Activated B cell treated with CpG ODN at 0.5 μM for 24 hours (primary cell): ENCODE measurements at regions of chr5 and their contacts with region 1.

Region 1: DNA sequence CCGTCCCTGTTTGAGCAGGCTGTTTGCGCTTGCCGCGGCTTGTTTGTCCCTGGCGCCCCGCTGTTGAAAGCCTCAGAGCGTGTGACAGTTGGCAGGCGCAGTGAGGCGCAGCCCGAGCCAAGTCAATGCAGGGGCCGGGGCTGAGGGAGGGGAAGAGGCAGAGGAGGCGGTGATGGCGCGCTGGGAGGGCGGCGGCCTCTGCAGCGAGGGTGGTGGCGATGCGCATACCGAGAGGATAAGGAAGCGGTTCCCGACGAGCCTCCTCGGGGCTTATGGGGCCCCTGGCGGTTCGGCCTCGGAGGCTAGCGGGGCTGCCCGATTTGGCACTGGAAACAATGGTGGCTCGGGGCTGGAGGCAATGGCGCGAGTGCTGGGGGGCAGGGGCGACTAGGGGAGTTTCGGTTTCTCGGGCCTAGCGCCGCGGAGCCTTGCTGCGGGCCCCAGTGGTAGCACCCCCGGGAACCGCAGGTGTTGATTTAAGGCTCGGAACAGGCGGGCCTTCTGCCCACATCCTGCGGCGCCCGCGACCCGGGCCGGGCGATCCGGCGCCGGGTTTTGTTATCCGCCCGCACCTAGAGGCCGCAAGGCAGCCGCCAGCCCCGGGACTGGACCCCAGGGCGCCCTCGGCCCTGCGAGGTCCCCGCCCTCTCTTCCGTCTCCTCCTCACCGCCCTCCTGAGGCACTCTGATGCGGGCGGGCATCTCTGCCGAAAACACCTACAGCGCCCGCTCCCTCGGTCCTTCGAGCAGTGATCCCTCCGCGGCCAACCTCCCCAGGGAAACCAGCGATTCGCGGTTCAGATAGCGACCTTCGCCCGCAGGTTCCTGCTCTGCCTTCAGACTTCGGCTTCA is 947 bp upstream of the LNPEP start:
- DNase-seq: peak; percentile 97
- ATAC-seq: peak; percentile 69
- H3K4me3 Mint-ChIP-seq: peak overlapping the region; percentile 98
- H3K27ac Mint-ChIP-seq: peak overlapping the region; percentile 98
- H3K4me1 Mint-ChIP-seq: peaks cover 78% of the 10 kb centered on the region
- H3K27me3 Mint-ChIP-seq: no peaks in the 10 kb centered on the region
- CTCF ChIP-seq: no peak

Region 2: GRCh38 chr5:95554647-95555548 is 1380.0 kb before region 1 on chr5 and contains the starts of genes ARSK and SKIC3:
- CTCF ChIA-PET with region 1: no interaction called
- POLR2A ChIA-PET with region 1: no interaction called
- intact Hi-C with region 1: loop called (anchors 2 kb)
- DNase-seq: peak; percentile 80
- ATAC-seq: peak; percentile 86
- H3K4me3 Mint-ChIP-seq: peak within 1 kb of the TSS; percentile 95
- H3K27ac Mint-ChIP-seq: peak within 1 kb of the TSS; percentile 92
- H3K4me1 Mint-ChIP-seq: peaks cover 43% of the 10 kb centered on the region
- H3K27me3 Mint-ChIP-seq: no peaks in the 10 kb centered on the region
- CTCF ChIP-seq: no peak
- total RNA-seq, gene ARSK: 2.3 and 2.9 TPM in 2 replicates
- total RNA-seq, gene SKIC3: 67.4 and 78.7 TPM in 2 replicates

Region 3: GRCh38 chr5:96662725-96663513 is 272.0 kb before region 1 on chr5:
- CTCF ChIA-PET with region 1: no interaction called
- POLR2A ChIA-PET with region 1: interaction called, 8 read pairs
- intact Hi-C with region 1: loop called (anchors 1 kb)
- DNase-seq: peak; percentile 89
- ATAC-seq: peak; percentile 72
- H3K4me3 Mint-ChIP-seq: peak overlapping the region; percentile 98
- H3K27ac Mint-ChIP-seq: peak overlapping the region; percentile 98
- H3K4me1 Mint-ChIP-seq: peaks cover 51% of the 10 kb centered on the region
- H3K27me3 Mint-ChIP-seq: no peaks in the 10 kb centered on the region
- CTCF ChIP-seq: no peak

Region 4: DNA sequence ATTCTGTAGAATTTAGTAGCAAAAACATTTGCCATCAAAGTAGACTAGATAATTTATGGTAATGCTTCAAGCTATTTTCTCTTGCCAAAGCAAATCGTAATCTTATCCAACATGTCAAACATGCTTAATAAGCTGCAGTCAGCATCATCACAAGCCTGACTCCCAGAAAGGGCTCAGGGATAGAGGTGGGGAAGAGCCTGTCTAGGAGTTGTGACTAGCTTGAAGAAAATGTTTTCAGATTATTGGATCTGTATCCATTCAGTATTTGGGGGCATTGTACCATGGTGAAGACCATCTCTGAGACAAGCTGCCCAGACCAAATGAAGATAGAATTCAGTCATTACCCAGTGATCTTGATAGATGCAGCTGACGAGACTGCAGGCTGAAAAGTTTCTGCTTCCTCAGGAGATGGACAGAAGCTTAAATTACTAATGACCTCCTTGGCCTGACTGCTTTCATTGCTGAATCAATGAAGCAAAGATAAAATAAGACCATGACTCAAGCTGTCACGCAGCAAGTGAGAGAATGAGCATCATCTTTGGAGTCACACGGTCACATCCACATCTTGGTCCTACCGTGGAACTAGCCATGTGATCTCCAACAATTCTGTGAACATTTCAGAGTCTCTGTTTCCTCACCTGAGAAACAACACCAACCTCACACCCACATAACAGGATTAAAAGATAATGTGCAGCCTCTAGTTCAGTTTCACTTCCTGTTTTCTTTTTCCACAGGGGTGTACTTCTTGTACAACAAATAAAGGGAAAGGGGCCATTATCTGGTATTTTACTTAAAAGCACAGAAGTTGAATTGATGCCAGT is 49.2 kb before region 1 on chr5:
- CTCF ChIA-PET with region 1: no interaction called
- POLR2A ChIA-PET with region 1: interaction called, 12 read pairs
- intact Hi-C with region 1: no loop called
- DNase-seq: no peak
- ATAC-seq: peak; percentile 85
- H3K4me3 Mint-ChIP-seq: peak overlapping the region; percentile 67
- H3K27ac Mint-ChIP-seq: peak overlapping the region; percentile 91
- H3K4me1 Mint-ChIP-seq: peaks cover 58% of the 10 kb centered on the region
- H3K27me3 Mint-ChIP-seq: no peaks in the 10 kb centered on the region
- CTCF ChIP-seq: no peak

Region 5: DNA sequence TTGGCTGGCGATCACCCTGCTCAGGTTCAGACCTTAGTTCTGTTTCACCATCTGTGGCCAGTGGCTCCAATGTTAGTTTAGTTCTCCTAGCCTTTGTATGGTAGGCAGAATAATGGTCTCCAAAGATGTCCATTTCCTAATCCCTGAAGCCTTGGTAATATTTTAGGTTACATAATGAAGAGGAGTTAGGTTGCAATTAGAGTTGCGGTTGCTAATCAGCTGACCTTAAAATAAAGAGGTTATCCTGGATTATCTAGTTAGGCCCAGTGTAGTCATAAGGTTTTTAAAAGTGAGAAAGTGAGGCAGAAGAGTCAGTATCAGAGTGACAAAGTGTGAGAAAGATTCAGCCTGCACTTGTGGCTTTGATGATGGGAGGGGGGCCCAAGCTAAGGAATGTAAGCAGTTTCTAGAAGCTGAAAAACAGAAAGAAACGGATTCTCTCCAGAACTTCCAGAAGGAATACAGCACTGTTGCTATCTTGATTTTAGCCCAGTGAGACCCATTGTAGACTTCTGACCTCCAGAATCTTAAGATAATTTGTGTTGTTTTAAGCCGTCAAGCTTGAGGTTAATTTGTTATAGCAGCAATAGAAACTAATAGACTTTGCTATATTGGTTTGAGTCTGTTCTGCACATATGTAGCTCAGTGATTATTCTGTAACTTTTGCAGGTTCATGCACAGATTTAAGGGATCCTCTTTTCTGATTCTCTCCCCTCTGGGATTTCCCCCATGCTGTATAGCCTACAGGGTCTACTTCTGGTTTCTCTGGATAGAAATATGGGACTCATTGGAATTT is 22.5 kb after region 1 on chr5:
- CTCF ChIA-PET with region 1: interaction called, 3 read pairs
- POLR2A ChIA-PET with region 1: interaction called, 29 read pairs
- intact Hi-C with region 1: loop called (anchors 1 kb)
- DNase-seq: no peak
- ATAC-seq: peak; percentile 40
- H3K4me3 Mint-ChIP-seq: peak overlapping the region; percentile 73
- H3K27ac Mint-ChIP-seq: peak overlapping the region; percentile 86
- H3K4me1 Mint-ChIP-seq: peaks cover 84% of the 10 kb centered on the region
- H3K27me3 Mint-ChIP-seq: no peaks in the 10 kb centered on the region
- CTCF ChIP-seq: no peak

Region 6: GRCh38 chr5:96997265-96997859 is 62.4 kb after region 1 on chr5:
- CTCF ChIA-PET with region 1: interaction called, 6 read pairs
- POLR2A ChIA-PET with region 1: interaction called, 16 read pairs
- intact Hi-C with region 1: loop called (anchors 2 kb)
- DNase-seq: no peak
- ATAC-seq: peak; percentile 68
- H3K4me3 Mint-ChIP-seq: no peak overlapping the region
- H3K27ac Mint-ChIP-seq: no peak overlapping the region
- H3K4me1 Mint-ChIP-seq: peaks cover 6% of the 10 kb centered on the region
- H3K27me3 Mint-ChIP-seq: no peaks in the 10 kb centered on the region
- CTCF ChIP-seq: no peak

Region 7: GRCh38 chr5:97183100-97183929 is 248.4 kb after region 1 on chr5 and contains the start of gene RIOK2:
- CTCF ChIA-PET with region 1: no interaction called
- POLR2A ChIA-PET with region 1: no interaction called
- intact Hi-C with region 1: loop called (anchors 1 kb)
- DNase-seq: peak; percentile 78
- ATAC-seq: peak; percentile 89
- H3K4me3 Mint-ChIP-seq: peak within 1 kb of the TSS; percentile 96
- H3K27ac Mint-ChIP-seq: peak within 1 kb of the TSS; percentile 99
- H3K4me1 Mint-ChIP-seq: peaks cover 34% of the 10 kb centered on the region
- H3K27me3 Mint-ChIP-seq: no peaks in the 10 kb centered on the region
- CTCF ChIP-seq: no peak
- total RNA-seq, gene RIOK2: 38.3 and 41.4 TPM in 2 replicates